Pancreas (tissue), 10 donors: ENCODE measurements at regions of chr2 and their contacts with region 1.

Region 1: GRCh38 chr2:27191053-27191829 is 20.6 kb upstream of the ATRAID start:
- DNase-seq: no peak
- ATAC-seq: peak in 3 of 4 donors; percentile 63 to 76 (median 72)
- H3K4me3 ChIP-seq: no peak overlapping the region
- H3K27ac ChIP-seq: no peak overlapping the region
- H3K4me1 ChIP-seq: peaks cover 0 to 4% (median 0%) of the 10 kb centered on the region in 3 donors
- H3K27me3 ChIP-seq: no peaks in the 10 kb centered on the region
- CTCF ChIP-seq: peak in 3 of 4 donors; percentile 17 to 25 (median 24)

Region 2: GRCh38 chr2:27095745-27096651 is 95.2 kb before region 1 on chr2:
- intact Hi-C with region 1: loop called in 1 of 3 experiments (anchors 10 kb)
- DNase-seq: peak in 5 of 6 donors; percentile 71 to 83 (median 74)
- ATAC-seq: peak; percentile 90 to 95 (median 94)
- H3K4me3 ChIP-seq: peak overlapping the region in 3 of 4 donors; percentile 10 to 48 (median 20)
- H3K27ac ChIP-seq: peak overlapping the region in 3 of 4 donors; percentile 8 to 24 (median 23)
- H3K4me1 ChIP-seq: peaks cover 0 to 10% (median 8%) of the 10 kb centered on the region in 3 donors
- H3K27me3 ChIP-seq: no peaks in the 10 kb centered on the region
- CTCF ChIP-seq: no peak

Region 3: GRCh38 chr2:27249891-27250651 is 58.8 kb after region 1 on chr2:
- intact Hi-C with region 1: no loop called
- DNase-seq: peak in 5 of 6 donors; percentile 25 to 84 (median 59)
- ATAC-seq: peak; percentile 81 to 97 (median 86)
- H3K4me3 ChIP-seq: no peak overlapping the region
- H3K27ac ChIP-seq: no peak overlapping the region
- H3K4me1 ChIP-seq: no peaks in the 10 kb centered on the region
- H3K27me3 ChIP-seq: no peaks in the 10 kb centered on the region
- CTCF ChIP-seq: peak; percentile 18 to 60 (median 37)